ENCODE measurements at regions of chr5 and their contacts with region 1.

Region 1: DNA sequence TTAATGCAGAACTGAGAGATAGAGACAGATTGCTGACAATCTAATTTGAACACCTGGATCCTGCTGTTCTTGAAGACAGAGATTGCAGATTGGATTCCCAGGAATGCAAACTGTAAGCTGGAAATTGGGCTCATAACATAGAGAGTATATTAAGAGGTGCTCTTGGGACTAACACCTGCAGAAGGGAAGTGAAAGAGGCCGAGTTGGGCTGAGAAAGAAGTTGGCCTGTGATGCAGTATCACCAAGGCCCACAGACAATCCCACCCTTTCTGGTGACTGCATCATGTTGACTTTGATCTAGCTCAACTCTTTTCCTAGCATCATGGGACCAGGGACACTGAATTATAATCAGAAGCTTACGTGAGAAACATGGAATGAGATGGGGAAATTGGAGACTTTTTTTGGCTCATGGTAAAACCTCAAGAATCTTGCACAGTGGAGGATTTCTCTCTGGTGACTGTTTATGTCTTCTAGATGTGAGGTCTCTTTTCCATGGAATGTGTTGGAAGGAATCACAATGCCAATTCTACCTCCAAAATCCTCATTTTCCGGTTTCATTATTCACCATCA is 36.5 kb upstream of the NUDT12 start:
- DNase-seq: no peak
- H3K4me3 ChIP-seq: no peak overlapping the region
- H3K27ac ChIP-seq: no peak overlapping the region
- H3K4me1 ChIP-seq: peaks cover 0 to 3% of the 10 kb centered on the region in 2 experiments; a peak in 2 of 4 replicates
- H3K27me3 ChIP-seq: no peaks in the 10 kb centered on the region
- CTCF ChIP-seq: no peak
- EP300 ChIP-seq: no peak
- RAD21 ChIP-seq: no peak

Region 2: GRCh38 chr5:103582364-103582763 is 16.7 kb before region 1 on chr5:
- CTCF ChIA-PET with region 1: interaction called, 12 read pairs
- POLR2A ChIA-PET with region 1: no interaction called
- DNase-seq: peak; percentile 32
- H3K4me3 ChIP-seq: no peak overlapping the region; a peak in 1 of 4 replicates
- H3K27ac ChIP-seq: no peak overlapping the region
- H3K4me1 ChIP-seq: no peaks in the 10 kb centered on the region; a peak in 1 of 4 replicates
- H3K27me3 ChIP-seq: no peaks in the 10 kb centered on the region
- CTCF ChIP-seq: peak; percentile 72
- EP300 ChIP-seq: no peak
- RAD21 ChIP-seq: peak; percentile 82

Region 3: DNA sequence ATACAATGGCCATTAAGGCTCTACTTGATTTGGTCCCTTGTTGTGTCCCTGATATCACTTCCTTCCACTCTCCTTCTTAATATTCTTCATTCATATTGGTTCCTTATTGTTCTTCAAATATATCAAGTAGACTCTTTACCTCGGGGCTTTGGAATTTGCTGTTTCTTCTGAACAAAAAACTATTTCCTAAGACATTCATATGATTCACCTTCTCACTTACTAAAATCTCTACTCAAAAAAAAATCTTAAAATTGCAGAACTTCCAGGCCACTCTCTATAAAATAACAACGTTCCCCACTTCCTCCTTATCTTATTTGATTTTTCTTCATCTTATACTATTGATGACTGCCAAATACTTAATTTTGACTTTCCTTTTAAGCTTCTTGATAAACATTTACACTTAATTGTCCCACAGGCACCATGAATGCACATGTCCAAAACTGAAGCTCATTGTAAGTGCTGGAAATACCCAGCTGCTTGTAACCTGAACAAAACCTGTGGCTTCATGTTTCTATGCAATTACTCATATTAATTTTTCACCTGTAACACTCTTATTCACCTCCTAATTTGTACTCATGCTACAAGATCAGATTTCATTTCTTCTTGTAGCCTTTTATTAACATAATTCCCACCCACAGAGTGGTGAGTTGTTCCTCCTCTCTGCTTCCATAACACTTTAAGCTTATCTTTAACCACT is 21.9 kb after region 1 on chr5:
- CTCF ChIA-PET with region 1: no interaction called
- POLR2A ChIA-PET with region 1: no interaction called
- DNase-seq: no peak
- H3K4me3 ChIP-seq: no peak overlapping the region
- H3K27ac ChIP-seq: no peak overlapping the region
- H3K4me1 ChIP-seq: no peaks in the 10 kb centered on the region; a peak in 1 of 4 replicates
- H3K27me3 ChIP-seq: no peaks in the 10 kb centered on the region
- CTCF ChIP-seq: no peak
- EP300 ChIP-seq: no peak
- RAD21 ChIP-seq: no peak